ENCODE measurements at regions of chr1 and their contacts with region 1.

Region 1: GRCh38 chr1:114764689-114765088 is 6.9 kb upstream of the CSDE1 start:
- DNase-seq: no peak
- ATAC-seq: no peak
- H3K4me3 ChIP-seq: no peak overlapping the region
- H3K27ac ChIP-seq: no peak overlapping the region
- H3K4me1 ChIP-seq: no peaks in the 10 kb centered on the region
- H3K27me3 ChIP-seq: no peaks in the 10 kb centered on the region
- CTCF ChIP-seq: no peak
- POLR2A ChIP-seq: no peak
- RAD21 ChIP-seq: no peak

Region 2: DNA sequence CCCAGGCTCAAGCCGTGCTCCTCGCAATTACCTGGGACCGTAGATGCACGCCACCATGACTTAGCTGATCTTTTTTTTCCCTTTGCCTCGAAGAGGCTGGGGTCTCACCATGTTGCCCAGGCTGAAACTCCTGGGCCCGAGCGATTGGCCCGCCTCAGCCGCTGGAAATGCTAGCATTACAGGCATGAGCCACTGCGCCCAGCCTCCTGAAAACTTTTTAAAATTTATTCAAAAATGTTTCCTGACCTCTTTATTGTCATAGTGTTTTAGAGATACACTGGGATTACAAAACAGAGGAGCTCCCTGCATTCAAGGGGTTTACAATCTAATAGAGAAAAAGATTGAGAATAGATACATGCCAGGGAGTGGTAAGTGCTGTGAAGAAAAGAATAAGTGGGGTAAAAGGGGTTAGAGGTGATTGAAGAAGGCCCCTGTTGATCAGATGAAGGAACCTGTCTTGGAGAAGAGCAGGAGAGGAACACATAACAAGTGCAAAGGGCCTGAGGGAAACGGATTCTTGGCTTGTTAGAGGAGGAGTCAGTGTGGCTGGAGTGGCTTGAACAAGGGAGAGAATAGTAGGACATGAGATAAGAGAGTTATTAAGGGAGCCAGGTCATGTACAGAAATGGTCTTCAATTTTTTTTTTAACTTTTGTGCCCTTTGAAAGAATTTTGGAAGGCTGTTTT is 252.0 kb before region 1 on chr1:
- CTCF ChIA-PET with region 1: no interaction called
- POLR2A ChIA-PET with region 1: no interaction called
- dilution Hi-C with region 1: no loop called
- in situ Hi-C with region 1: no loop called
- intact Hi-C with region 1: no loop called
- DNase-seq: no peak
- ATAC-seq: no peak
- H3K4me3 ChIP-seq: no peak overlapping the region
- H3K27ac ChIP-seq: no peak overlapping the region
- H3K4me1 ChIP-seq: peaks cover under 1% of the 10 kb centered on the region; the same call in 1 of the 2 replicates
- H3K27me3 ChIP-seq: no peaks in the 10 kb centered on the region
- CTCF ChIP-seq: no peak
- POLR2A ChIP-seq: no peak
- RAD21 ChIP-seq: no peak

Region 3: GRCh38 chr1:114819869-114820268 is 55.2 kb after region 1 on chr1:
- CTCF ChIA-PET with region 1: no interaction called
- POLR2A ChIA-PET with region 1: no interaction called
- dilution Hi-C with region 1: no loop called
- in situ Hi-C with region 1: no loop called
- intact Hi-C with region 1: no loop called
- DNase-seq: no peak
- ATAC-seq: no peak
- H3K4me3 ChIP-seq: no peak overlapping the region
- H3K27ac ChIP-seq: no peak overlapping the region
- H3K4me1 ChIP-seq: no peaks in the 10 kb centered on the region
- H3K27me3 ChIP-seq: no peaks in the 10 kb centered on the region
- CTCF ChIP-seq: no peak
- POLR2A ChIP-seq: no peak
- RAD21 ChIP-seq: no peak

Region 4: GRCh38 chr1:114849975-114850374 is 85.3 kb after region 1 on chr1:
- CTCF ChIA-PET with region 1: interaction called, 4 read pairs
- POLR2A ChIA-PET with region 1: interaction called, 12 read pairs
- dilution Hi-C with region 1: no loop called
- in situ Hi-C with region 1: no loop called
- intact Hi-C with region 1: no loop called
- DNase-seq: no peak
- ATAC-seq: no peak
- H3K4me3 ChIP-seq: no peak overlapping the region
- H3K27ac ChIP-seq: no peak overlapping the region
- H3K4me1 ChIP-seq: no peaks in the 10 kb centered on the region
- H3K27me3 ChIP-seq: peaks cover 13% of the 10 kb centered on the region
- CTCF ChIP-seq: no peak
- POLR2A ChIP-seq: no peak
- RAD21 ChIP-seq: no peak

Region 5: GRCh38 chr1:114956564-114956963 is 191.9 kb after region 1 on chr1:
- CTCF ChIA-PET with region 1: no interaction called
- POLR2A ChIA-PET with region 1: no interaction called
- dilution Hi-C with region 1: no loop called
- in situ Hi-C with region 1: no loop called
- intact Hi-C with region 1: no loop called
- DNase-seq: no peak
- ATAC-seq: no peak
- H3K4me3 ChIP-seq: no peak overlapping the region
- H3K27ac ChIP-seq: no peak overlapping the region
- H3K4me1 ChIP-seq: no peaks in the 10 kb centered on the region
- H3K27me3 ChIP-seq: no peaks in the 10 kb centered on the region
- CTCF ChIP-seq: 0 out of 2 replicates have a peak, but pooled peaks have one; percentile 20
- POLR2A ChIP-seq: no peak
- RAD21 ChIP-seq: peak; percentile 28; the same call in 1 of the 2 replicates

Measured in IMR-90 (cell line).